ENCODE measurements at regions of chr12 and their contacts with region 1.

Region 1: GRCh38 chr12:79344855-79345847 is 345.6 kb downstream of the PAWR start:
- DNase-seq: peak; percentile 42
- H3K4me3 ChIP-seq: no peak overlapping the region; a peak in 1 of 4 replicates
- H3K27ac ChIP-seq: no peak overlapping the region
- H3K4me1 ChIP-seq: no peaks in the 10 kb centered on the region
- H3K27me3 ChIP-seq: no peaks in the 10 kb centered on the region
- CTCF ChIP-seq: peak; percentile 62
- EP300 ChIP-seq: no peak
- RAD21 ChIP-seq: peak; percentile 88

Region 2: GRCh38 chr12:79358716-79359300 is 13.7 kb after region 1 on chr12:
- CTCF ChIA-PET with region 1: interaction called, 10 read pairs
- POLR2A ChIA-PET with region 1: no interaction called
- DNase-seq: no peak
- H3K4me3 ChIP-seq: no peak overlapping the region
- H3K27ac ChIP-seq: no peak overlapping the region
- H3K4me1 ChIP-seq: no peaks in the 10 kb centered on the region; a peak in 3 of 4 replicates
- H3K27me3 ChIP-seq: no peaks in the 10 kb centered on the region
- CTCF ChIP-seq: no peak
- EP300 ChIP-seq: no peak
- RAD21 ChIP-seq: no peak

Region 3: DNA sequence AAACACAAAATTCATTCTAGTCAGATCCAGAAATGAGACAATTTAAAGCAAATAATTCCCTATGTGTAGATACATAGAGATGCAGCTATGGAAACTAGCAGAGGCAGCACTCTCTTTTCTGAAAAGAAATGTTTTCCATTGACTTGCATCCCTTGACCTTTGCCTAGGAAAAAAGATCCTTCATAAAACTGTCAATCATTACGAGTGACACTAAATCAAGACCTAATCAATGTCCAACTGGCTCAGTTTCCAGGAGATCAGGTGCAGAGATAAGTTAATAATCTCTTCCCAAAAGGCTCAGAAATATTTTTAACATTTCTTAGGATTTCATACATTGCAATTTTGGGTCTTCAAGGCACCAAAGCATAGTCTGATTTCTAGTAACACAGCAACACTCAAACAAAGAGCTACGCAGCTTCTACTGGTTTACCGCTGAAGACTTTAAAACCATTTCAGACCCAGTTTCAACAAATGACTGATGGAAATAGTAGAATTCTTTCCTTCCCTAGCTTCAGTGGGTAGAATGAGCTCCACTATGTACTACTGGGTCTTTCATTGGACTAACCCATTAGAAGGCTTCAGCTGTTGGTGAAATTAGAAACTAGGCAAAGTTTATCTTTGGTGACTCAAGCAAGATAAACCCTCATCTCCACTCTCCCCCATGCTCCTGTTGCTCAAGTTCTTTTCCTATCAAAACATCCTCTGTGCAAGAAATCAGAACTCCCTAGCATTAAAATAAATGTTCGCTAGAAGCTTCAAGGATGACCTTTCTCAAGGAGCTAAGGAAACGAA is 186.2 kb after region 1 on chr12:
- CTCF ChIA-PET with region 1: no interaction called
- POLR2A ChIA-PET with region 1: no interaction called
- DNase-seq: no peak
- H3K4me3 ChIP-seq: no peak overlapping the region
- H3K27ac ChIP-seq: no peak overlapping the region
- H3K4me1 ChIP-seq: no peaks in the 10 kb centered on the region
- H3K27me3 ChIP-seq: no peaks in the 10 kb centered on the region
- CTCF ChIP-seq: no peak
- EP300 ChIP-seq: no peak
- RAD21 ChIP-seq: no peak

Measured in SK-N-SH (cell line).